Activated B cell treated with CpG ODN at 0.5 μM for 24 hours (primary cell): ENCODE measurements at regions of chr21 and their contacts with region 1.

Region 1: DNA sequence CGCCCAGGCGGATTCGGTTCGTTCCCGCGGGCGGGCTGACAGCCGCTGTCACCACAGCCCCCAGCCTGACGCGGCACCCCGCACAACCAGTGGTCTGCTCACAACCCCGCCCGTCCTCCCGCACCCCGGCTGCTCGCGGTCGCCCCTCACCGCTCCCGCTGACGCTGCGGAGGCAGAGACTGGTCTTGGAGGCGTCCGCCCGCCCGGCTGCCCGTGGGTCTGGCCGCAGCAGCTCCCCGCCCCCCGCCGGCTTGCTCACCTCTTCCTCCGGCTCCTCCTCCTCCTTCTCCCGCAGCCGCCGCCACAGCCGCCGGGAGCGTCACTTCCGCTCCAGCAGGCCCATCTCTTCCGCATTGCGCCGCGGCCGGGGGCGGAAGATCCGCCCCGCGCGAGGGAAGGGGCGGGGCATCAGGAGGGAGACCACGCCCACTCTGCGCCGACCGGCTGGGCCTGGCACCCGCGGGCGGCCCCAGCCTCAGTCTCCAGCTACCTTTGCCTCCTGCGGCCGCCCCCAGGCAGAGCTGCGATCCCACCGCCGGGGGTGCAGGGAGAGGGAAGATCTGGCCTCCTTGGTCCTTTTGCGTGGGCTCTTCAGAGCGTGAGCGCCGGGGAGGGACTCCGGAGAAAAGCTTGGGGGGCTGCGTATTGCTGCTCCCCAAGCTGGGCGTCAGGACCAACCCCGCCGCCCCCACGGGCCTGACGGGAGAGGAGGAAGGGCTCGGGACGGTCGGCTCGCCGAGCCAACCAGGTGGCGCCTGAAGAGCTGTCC is at the start of gene SYNJ1:
- DNase-seq: peak; percentile 94
- ATAC-seq: peak; percentile 91
- H3K4me3 Mint-ChIP-seq: peak within 1 kb of the TSS; percentile 93
- H3K27ac Mint-ChIP-seq: peak within 1 kb of the TSS; percentile 72
- H3K4me1 Mint-ChIP-seq: peaks cover 14% of the 10 kb centered on the region
- H3K27me3 Mint-ChIP-seq: no peaks in the 10 kb centered on the region
- CTCF ChIP-seq: no peak
- total RNA-seq, gene SYNJ1: 5.2 and 5.4 TPM in 2 replicates

Region 2: GRCh38 chr21:32278518-32279376 is 449.1 kb before region 1 on chr21 and contains the start of gene MIS18A:
- CTCF ChIA-PET with region 1: no interaction called
- POLR2A ChIA-PET with region 1: no interaction called
- intact Hi-C with region 1: loop called (anchors 5 kb)
- DNase-seq: peak; percentile 96
- ATAC-seq: peak; percentile 96
- H3K4me3 Mint-ChIP-seq: peak within 1 kb of the TSS; percentile 98
- H3K27ac Mint-ChIP-seq: peak within 1 kb of the TSS; percentile 88
- H3K4me1 Mint-ChIP-seq: peaks cover 16% of the 10 kb centered on the region
- H3K27me3 Mint-ChIP-seq: no peaks in the 10 kb centered on the region
- CTCF ChIP-seq: no peak
- total RNA-seq, gene MIS18A: 6.8 and 7.7 TPM in 2 replicates

Region 3: DNA sequence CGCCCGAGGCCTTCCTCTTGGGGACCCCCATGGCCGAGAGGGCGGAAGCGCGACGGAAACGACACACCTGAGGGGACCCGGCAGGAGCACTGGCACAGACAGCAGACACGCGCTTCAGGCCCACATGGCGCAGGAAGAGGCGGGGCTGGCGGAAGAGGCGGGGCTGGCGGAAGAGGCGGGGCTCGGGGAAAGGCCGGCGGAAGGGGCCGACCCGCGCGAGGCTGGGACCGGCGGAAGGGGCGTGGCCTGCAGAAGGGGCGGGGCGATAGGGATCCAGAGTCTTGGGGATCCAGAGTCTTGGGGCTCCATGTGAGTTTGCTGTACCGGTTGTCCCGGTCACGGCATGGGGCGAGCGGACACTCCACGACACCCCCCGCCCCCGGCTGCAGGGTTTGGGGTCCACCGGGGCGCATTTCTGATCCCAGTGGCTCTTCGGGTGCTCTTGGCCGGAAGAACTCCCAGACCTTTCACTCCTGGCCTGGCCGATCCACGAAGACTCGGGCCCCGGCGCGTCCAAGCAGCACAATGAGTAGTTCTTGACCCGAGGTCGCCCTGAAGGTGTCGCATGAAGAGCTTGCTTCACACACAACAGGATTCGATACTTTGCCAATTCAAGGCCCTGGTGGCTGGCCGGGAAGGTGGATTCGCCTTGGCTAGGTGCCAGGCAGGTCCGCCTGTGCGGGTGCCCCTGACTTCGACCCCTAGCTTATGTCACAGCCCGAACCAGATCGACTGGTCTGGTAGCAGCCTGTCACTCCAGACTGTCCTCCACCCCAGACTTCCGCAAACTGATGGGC is 334.8 kb before region 1 on chr21 and contains the start of gene URB1:
- CTCF ChIA-PET with region 1: no interaction called
- POLR2A ChIA-PET with region 1: no interaction called
- intact Hi-C with region 1: loop called (anchors 2 kb)
- DNase-seq: peak; percentile 97
- ATAC-seq: peak; percentile 97
- H3K4me3 Mint-ChIP-seq: peak within 1 kb of the TSS; percentile 87
- H3K27ac Mint-ChIP-seq: peak within 1 kb of the TSS; percentile 83
- H3K4me1 Mint-ChIP-seq: peaks cover 41% of the 10 kb centered on the region
- H3K27me3 Mint-ChIP-seq: peaks cover 6% of the 10 kb centered on the region
- CTCF ChIP-seq: no peak
- total RNA-seq, gene URB1: 18.1 and 22.2 TPM in 2 replicates

Region 4: DNA sequence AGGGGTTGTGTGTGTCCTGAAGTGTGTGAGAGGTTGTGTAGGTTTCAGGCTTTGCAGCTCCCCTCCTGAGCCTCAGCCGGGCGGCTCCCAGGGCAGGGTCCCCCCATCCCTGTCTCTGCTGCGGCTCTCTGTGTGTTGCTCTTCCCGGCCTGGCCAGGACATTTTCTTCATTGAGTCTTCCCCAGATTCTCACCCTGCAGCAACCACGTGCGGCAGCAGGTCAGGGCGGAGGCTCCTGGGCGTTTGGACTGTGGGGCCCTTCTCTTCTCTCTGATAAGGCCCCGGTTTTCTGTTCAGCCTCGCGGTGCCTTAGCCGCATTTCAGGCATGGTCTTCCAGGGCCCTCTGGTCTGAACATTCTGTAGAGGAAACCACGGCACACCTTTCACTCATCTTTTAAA is 140.8 kb before region 1 on chr21:
- CTCF ChIA-PET with region 1: no interaction called
- POLR2A ChIA-PET with region 1: no interaction called
- intact Hi-C with region 1: no loop called
- DNase-seq: no peak
- ATAC-seq: no peak
- H3K4me3 Mint-ChIP-seq: no peak overlapping the region
- H3K27ac Mint-ChIP-seq: no peak overlapping the region
- H3K4me1 Mint-ChIP-seq: no peaks in the 10 kb centered on the region
- H3K27me3 Mint-ChIP-seq: no peaks in the 10 kb centered on the region
- CTCF ChIP-seq: no peak

Region 5: DNA sequence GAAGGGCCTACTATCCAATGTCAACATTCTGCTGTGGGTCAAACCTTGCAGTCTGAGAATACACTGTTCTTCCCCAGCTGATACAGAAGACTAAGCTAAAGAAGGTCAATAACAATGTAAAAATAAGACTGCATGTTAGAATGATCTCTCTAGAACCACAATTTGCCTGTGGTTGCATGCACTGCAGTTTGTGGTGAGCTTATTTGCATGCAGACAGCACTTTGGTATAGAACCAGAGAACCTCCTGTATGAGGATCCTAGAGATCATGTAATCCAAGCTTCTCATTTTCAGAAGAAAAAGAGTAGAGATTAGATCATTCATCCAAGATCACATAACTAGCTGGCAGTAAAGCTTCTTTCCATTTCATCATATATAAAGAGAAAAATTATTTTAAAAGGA is 15.8 kb before region 1 on chr21:
- CTCF ChIA-PET with region 1: interaction called, 5 read pairs
- POLR2A ChIA-PET with region 1: interaction called, 22 read pairs
- intact Hi-C with region 1: loop called (anchors 1 kb)
- DNase-seq: peak; percentile 32
- ATAC-seq: peak; percentile 95
- H3K4me3 Mint-ChIP-seq: peak overlapping the region; percentile 24
- H3K27ac Mint-ChIP-seq: no peak overlapping the region
- H3K4me1 Mint-ChIP-seq: peaks cover 20% of the 10 kb centered on the region
- H3K27me3 Mint-ChIP-seq: peaks cover 42% of the 10 kb centered on the region
- CTCF ChIP-seq: no peak

Region 6: GRCh38 chr21:32779983-32780382 is 52.1 kb after region 1 on chr21:
- CTCF ChIA-PET with region 1: no interaction called
- POLR2A ChIA-PET with region 1: no interaction called
- intact Hi-C with region 1: no loop called
- DNase-seq: no peak
- ATAC-seq: peak; percentile 49
- H3K4me3 Mint-ChIP-seq: no peak overlapping the region
- H3K27ac Mint-ChIP-seq: peak overlapping the region; percentile 18
- H3K4me1 Mint-ChIP-seq: peaks cover 7% of the 10 kb centered on the region
- H3K27me3 Mint-ChIP-seq: no peaks in the 10 kb centered on the region
- CTCF ChIP-seq: no peak

Region 7: GRCh38 chr21:32900814-32901213 is 172.9 kb after region 1 on chr21:
- CTCF ChIA-PET with region 1: no interaction called
- POLR2A ChIA-PET with region 1: no interaction called
- intact Hi-C with region 1: no loop called
- DNase-seq: no peak
- ATAC-seq: no peak
- H3K4me3 Mint-ChIP-seq: no peak overlapping the region
- H3K27ac Mint-ChIP-seq: no peak overlapping the region
- H3K4me1 Mint-ChIP-seq: peaks cover 5% of the 10 kb centered on the region
- H3K27me3 Mint-ChIP-seq: peaks cover 26% of the 10 kb centered on the region
- CTCF ChIP-seq: no peak

Region 8: GRCh38 chr21:33109574-33110339 is 381.9 kb after region 1 on chr21:
- CTCF ChIA-PET with region 1: no interaction called
- POLR2A ChIA-PET with region 1: no interaction called
- intact Hi-C with region 1: no loop called
- DNase-seq: no peak
- ATAC-seq: no peak
- H3K4me3 Mint-ChIP-seq: no peak overlapping the region
- H3K27ac Mint-ChIP-seq: no peak overlapping the region
- H3K4me1 Mint-ChIP-seq: no peaks in the 10 kb centered on the region
- H3K27me3 Mint-ChIP-seq: peaks cover 63% of the 10 kb centered on the region
- CTCF ChIP-seq: no peak

Region 9: GRCh38 chr21:33491373-33492102 is 763.7 kb after region 1 on chr21 and contains the start of gene DNAJC28:
- CTCF ChIA-PET with region 1: no interaction called
- POLR2A ChIA-PET with region 1: no interaction called
- intact Hi-C with region 1: loop called (anchors 1 kb)
- DNase-seq: peak; percentile 97
- ATAC-seq: peak; percentile 98
- H3K4me3 Mint-ChIP-seq: peak within 1 kb of the TSS; percentile 92
- H3K27ac Mint-ChIP-seq: peak within 1 kb of the TSS; percentile 72
- H3K4me1 Mint-ChIP-seq: peaks cover 10% of the 10 kb centered on the region
- H3K27me3 Mint-ChIP-seq: no peaks in the 10 kb centered on the region
- CTCF ChIP-seq: no peak
- total RNA-seq, gene DNAJC28: 0.53 and 0.66 TPM in 2 replicates

Region 10: GRCh38 chr21:33915368-33916199 is 1187.7 kb after region 1 on chr21 and contains the start of gene ATP5PO:
- CTCF ChIA-PET with region 1: no interaction called
- POLR2A ChIA-PET with region 1: no interaction called
- intact Hi-C with region 1: loop called (anchors 5 kb)
- DNase-seq: peak; percentile 91
- ATAC-seq: peak; percentile 100
- H3K4me3 Mint-ChIP-seq: peak within 1 kb of the TSS; percentile 99
- H3K27ac Mint-ChIP-seq: peak within 1 kb of the TSS; percentile 96
- H3K4me1 Mint-ChIP-seq: peaks cover 25% of the 10 kb centered on the region
- H3K27me3 Mint-ChIP-seq: no peaks in the 10 kb centered on the region
- CTCF ChIP-seq: no peak
- total RNA-seq, gene ATP5PO: 169 and 193 TPM in 2 replicates